Gastrocnemius medialis (tissue), 4 donors: ENCODE measurements at regions of chr4 and their contacts with region 1.

Region 1: GRCh38 chr4:153095448-153096204 is 108.6 kb upstream of the TRIM2 start:
- DNase-seq: no peak
- ATAC-seq: no peak
- H3K4me3 ChIP-seq: no peak overlapping the region
- H3K27ac ChIP-seq: no peak overlapping the region
- H3K4me1 ChIP-seq: no peaks in the 10 kb centered on the region
- H3K27me3 ChIP-seq: no peaks in the 10 kb centered on the region
- CTCF ChIP-seq: no peak
- POLR2A ChIP-seq: no peak

Region 2: DNA sequence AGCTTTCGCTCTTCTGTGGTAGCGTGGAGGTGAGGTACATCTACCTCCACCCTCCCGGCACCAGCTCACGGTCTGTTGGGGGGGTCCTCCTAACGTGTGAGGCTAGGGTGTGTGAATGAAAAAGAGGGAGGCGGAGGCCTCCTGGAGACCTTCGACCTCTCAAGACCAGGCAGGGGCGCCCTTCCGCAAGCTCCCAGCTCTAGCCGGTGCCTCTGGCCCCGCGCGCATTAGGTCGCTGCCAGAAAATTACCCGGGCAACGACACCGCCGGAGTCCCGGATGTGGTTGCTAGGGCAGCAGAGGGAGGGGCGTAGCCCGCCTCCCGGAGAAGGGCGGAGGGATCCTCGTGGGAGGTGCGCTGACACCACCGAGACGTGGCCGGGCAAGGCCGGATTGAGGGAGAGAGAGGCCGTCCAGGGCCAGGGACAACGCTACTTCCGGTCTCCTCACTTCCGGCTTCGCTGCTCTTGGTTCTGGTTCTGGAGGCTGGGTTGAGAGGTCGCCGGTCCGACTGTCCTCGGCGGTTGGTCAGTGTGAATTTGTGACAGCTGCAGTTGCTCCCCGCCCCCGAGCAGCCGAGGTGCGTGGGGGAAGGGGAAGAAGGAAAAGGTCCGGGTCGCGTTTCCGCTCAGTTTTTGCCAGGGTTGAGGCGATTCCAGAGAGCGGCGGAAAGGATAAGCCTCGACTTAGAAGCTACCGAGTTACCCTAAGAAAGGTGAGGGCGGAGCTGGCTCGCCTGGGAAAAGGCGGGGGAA is 315.9 kb before region 1 on chr4 and contains the starts of genes ARFIP1 and TIGD4:
- in situ Hi-C with region 1: no loop called
- intact Hi-C with region 1: no loop called
- DNase-seq: peak; percentile 97
- ATAC-seq: peak; percentile 96 to 97
- H3K4me3 ChIP-seq: peak within 1 kb of the TSS; percentile 80 to 90 (median 90)
- H3K27ac ChIP-seq: peak within 1 kb of the TSS; percentile 84 to 95 (median 90)
- H3K4me1 ChIP-seq: peaks cover 28 to 38% of the 10 kb centered on the region in 2 donors
- H3K27me3 ChIP-seq: no peaks in the 10 kb centered on the region
- CTCF ChIP-seq: peak in 1 of 5 experiments; percentile 27
- POLR2A ChIP-seq: peak; percentile 46 to 49
- total RNA-seq, gene ARFIP1: 8.4 to 11.9 (median 9.7) TPM
- total RNA-seq, gene TIGD4: 0.09 to 0.23 TPM in 2 of 4 donors, not detected in the others

Region 3: DNA sequence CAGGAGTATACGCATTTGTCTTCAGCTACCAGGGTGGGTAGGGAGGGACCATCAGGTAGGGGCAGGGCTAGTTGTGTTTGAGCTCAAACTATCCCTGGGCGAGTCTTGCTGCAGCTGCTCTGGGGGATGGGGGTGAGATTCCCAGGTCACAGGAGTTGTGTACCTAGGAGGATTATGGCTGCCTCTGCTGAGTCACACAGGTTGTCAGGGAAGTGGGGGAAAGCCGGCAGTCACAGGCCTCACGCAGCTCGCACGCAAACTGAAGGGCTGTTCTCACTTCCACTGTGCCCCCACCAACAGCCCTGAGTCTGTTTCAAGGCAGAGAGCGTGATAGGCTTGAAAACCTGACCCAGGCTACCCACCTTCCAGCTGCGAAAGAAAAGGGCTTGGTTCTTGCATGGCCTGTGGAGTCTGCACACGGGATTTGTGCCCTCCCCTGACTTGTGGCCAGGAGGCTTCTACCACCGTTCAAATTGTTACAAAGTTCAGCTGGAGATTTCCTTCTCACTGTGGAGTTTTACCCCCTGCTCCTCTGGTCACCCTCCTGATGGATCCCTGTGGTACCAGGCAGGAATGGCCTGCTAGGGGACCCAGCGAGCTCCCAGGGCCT is 252.0 kb before region 1 on chr4:
- in situ Hi-C with region 1: loop called in 1 of 4 experiments (anchors 10 kb)
- intact Hi-C with region 1: no loop called
- DNase-seq: no peak
- ATAC-seq: no peak
- H3K4me3 ChIP-seq: no peak overlapping the region
- H3K27ac ChIP-seq: no peak overlapping the region
- H3K4me1 ChIP-seq: no peaks in the 10 kb centered on the region
- H3K27me3 ChIP-seq: no peaks in the 10 kb centered on the region
- CTCF ChIP-seq: no peak
- POLR2A ChIP-seq: no peak

Region 4: GRCh38 chr4:152896811-152897210 is 198.8 kb before region 1 on chr4:
- in situ Hi-C with region 1: no loop called
- intact Hi-C with region 1: no loop called
- DNase-seq: no peak
- ATAC-seq: no peak
- H3K4me3 ChIP-seq: no peak overlapping the region
- H3K27ac ChIP-seq: no peak overlapping the region
- H3K4me1 ChIP-seq: peaks cover 7 to 9% of the 10 kb centered on the region in 2 donors
- H3K27me3 ChIP-seq: no peaks in the 10 kb centered on the region
- CTCF ChIP-seq: no peak
- POLR2A ChIP-seq: no peak